ENCODE measurements at regions of chr1 and their contacts with region 1.

Region 1: DNA sequence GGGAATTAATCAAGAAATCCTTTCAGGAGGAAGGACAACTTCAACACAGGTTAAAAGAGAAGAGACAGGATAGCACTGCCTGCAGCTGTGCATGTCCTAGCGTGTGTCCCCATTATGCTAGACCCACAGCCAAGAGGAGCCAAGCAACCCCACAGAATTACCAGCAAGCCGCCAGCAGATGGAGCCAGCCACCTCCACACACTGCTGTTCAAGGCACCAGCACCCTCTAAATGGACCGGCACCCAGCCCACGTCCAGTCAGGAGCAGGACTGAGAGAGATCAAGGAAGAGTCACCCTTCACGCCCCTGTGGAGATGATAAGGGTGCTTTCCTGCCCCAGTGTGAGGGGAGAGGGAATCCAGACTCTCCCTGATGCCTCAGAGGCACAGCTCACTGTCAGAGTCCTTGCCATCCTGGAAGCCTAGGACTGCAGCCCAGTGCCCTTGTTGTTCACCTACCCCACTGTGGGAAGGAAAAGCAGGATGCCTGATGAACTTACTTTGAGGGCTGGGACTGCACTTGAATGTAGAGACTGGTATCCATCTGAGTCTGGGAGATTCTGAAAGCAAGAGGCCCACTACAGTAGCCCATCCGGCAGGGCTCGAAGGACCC is 37.1 kb upstream of the CTTNBP2NL start:
- DNase-seq: peak; percentile 65
- H3K4me3 ChIP-seq: no peak overlapping the region
- H3K27ac ChIP-seq: no peak overlapping the region
- H3K4me1 ChIP-seq: no peaks in the 10 kb centered on the region
- H3K27me3 ChIP-seq: peaks cover 14 to 30% of the 10 kb centered on the region in 2 experiments
- CTCF ChIP-seq: peak; percentile 79 to 88
- POLR2A ChIP-seq: no peak

Region 2: GRCh38 chr1:112369392-112370285 is 10.7 kb after region 1 on chr1:
- CTCF ChIA-PET with region 1: interaction called, 137 read pairs
- POLR2A ChIA-PET with region 1: no interaction called
- dilution Hi-C with region 1: no loop called
- intact Hi-C with region 1: no loop called
- DNase-seq: peak; percentile 87
- H3K4me3 ChIP-seq: no peak overlapping the region
- H3K27ac ChIP-seq: no peak overlapping the region
- H3K4me1 ChIP-seq: no peaks in the 10 kb centered on the region
- H3K27me3 ChIP-seq: peaks cover 10 to 12% of the 10 kb centered on the region in 2 experiments
- CTCF ChIP-seq: peak; percentile 98 to 99
- POLR2A ChIP-seq: no peak

Region 3: GRCh38 chr1:112614460-112615065 is 255.7 kb after region 1 on chr1:
- CTCF ChIA-PET with region 1: interaction called, 11 read pairs
- POLR2A ChIA-PET with region 1: no interaction called
- dilution Hi-C with region 1: no loop called
- intact Hi-C with region 1: loop called (anchors 1 kb)
- DNase-seq: peak; percentile 64
- H3K4me3 ChIP-seq: no peak overlapping the region
- H3K27ac ChIP-seq: no peak overlapping the region
- H3K4me1 ChIP-seq: peaks cover 14% of the 10 kb centered on the region
- H3K27me3 ChIP-seq: no peaks in the 10 kb centered on the region
- CTCF ChIP-seq: peak; percentile 40 to 49
- POLR2A ChIP-seq: no peak

Region 4: DNA sequence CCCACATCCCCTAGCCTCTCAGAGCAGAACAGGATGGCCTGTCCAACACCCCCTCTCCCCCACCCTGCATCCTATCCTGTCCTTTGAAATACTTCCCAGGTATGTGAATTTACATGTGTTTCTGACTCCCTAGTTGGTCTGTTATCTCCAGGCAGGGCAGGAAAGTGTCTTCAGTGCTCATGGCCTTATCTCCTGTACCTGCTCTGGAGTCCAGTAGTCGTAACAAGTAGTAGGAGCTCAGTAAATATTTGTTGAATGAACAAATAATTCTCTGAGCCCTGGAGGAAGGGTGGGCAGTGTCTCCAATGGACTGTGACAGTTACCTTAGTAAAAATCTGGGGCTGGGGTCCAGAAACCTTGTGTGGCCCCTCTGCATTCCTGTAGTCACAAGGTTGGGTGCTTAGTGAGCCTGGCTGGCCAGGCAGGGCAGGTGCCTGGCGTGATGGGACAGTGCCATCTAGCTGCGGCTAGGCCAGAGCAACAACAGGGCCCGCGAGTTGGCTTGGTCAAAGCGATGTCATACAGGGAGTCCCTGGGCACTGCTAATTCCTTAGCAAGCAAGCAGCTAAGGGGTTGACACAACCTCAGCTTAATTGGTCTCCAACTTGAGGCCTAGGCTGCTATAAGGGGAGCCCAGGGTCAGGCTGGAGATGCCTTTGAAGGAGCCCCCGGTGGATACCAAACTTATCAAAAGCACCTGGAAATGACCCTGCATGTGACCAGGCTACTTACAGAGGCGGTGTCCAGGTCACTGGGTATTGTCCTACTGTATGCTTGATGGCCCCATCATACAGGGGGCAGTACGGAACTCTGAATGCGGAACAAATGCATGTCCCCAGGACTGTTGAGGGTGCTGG is 445.2 kb after region 1 on chr1:
- CTCF ChIA-PET with region 1: interaction called, 10 read pairs
- POLR2A ChIA-PET with region 1: no interaction called
- dilution Hi-C with region 1: no loop called
- intact Hi-C with region 1: loop called (anchors 1 kb)
- DNase-seq: peak; percentile 69
- H3K4me3 ChIP-seq: no peak overlapping the region
- H3K27ac ChIP-seq: no peak overlapping the region
- H3K4me1 ChIP-seq: no peaks in the 10 kb centered on the region
- H3K27me3 ChIP-seq: no peaks in the 10 kb centered on the region
- CTCF ChIP-seq: peak; percentile 77 to 91
- POLR2A ChIP-seq: no peak

Measured in endothelial cell of umbilical vein (primary cell).